Mammary epithelial cell (primary cell): ENCODE measurements at regions of chr12 and their contacts with region 1.

Region 1: DNA sequence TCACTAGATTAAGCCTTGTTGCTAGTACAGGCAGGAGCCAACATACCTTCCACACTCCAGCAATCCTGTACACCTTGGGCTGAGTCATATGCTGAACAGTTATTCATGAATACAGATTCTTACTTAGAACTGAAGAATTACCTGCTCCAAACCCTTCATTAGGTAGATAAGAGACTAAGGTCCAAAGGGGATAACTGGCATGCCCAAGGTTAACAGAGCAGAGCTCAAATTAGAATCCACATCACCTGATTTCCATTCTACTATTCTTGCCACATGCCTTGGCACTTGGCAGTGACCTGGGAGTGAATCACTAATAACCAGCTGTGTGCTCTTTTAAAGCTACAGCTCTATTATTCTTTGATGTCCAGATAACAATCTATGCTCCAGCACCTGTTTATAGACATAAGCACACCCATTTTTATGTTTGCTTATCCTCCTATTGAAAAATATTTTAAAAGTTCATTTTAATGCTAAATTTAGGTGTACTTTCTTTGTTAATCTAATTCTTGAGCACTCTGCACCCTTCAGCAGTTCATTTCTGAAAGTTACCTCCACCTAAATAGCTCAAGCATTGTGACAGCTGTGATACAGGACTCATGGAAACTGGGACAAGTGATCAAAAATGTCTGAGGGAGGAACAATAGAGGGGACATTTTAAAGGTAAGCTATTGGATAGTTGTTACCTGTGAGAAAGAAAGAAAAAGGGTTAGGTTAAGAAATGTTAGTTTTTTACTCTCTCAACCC is 19.4 kb downstream of the LPCAT3 start:
- DNase-seq: peak; percentile 63
- H3K4me3 ChIP-seq: no peak overlapping the region
- H3K27ac ChIP-seq: no peak overlapping the region
- H3K4me1 ChIP-seq: peaks cover 24% of the 10 kb centered on the region
- H3K27me3 ChIP-seq: no peaks in the 10 kb centered on the region
- CTCF ChIP-seq: no peak

Region 2: GRCh38 chr12:6904280-6905278 is 94.3 kb before region 1 on chr12 and contains the start of gene LRRC23:
- CTCF ChIA-PET with region 1: no interaction called
- dilution Hi-C with region 1: loop called (anchors 5 kb)
- in situ Hi-C with region 1: no loop called
- intact Hi-C with region 1: no loop called
- DNase-seq: peak; percentile 93
- H3K4me3 ChIP-seq: peak within 1 kb of the TSS; percentile 69 to 78 (median 73)
- H3K27ac ChIP-seq: peak within 1 kb of the TSS; percentile 91
- H3K4me1 ChIP-seq: peaks cover 9% of the 10 kb centered on the region
- H3K27me3 ChIP-seq: no peaks in the 10 kb centered on the region
- CTCF ChIP-seq: no peak
- total RNA-seq, gene LRRC23: 4.3 to 4.7 TPM